ENCODE measurements at regions of chr19 and their contacts with region 1.

Region 1: GRCh38 chr19:40139533-40140287 is 49.0 kb upstream of the ZNF780A start:
- DNase-seq: peak in 1 of 2 experiments; percentile 54
- H3K4me3 ChIP-seq: no peak overlapping the region
- H3K27ac ChIP-seq: no peak overlapping the region
- H3K4me1 ChIP-seq: no peaks in the 10 kb centered on the region
- H3K27me3 ChIP-seq: peaks cover 31% of the 10 kb centered on the region
- CTCF ChIP-seq: peak; percentile 84

Region 2: GRCh38 chr19:39792999-39793546 is 346.6 kb before region 1 on chr19:
- CTCF ChIA-PET with region 1: no interaction called
- POLR2A ChIA-PET with region 1: no interaction called
- intact Hi-C with region 1: loop called (anchors 10 kb)
- DNase-seq: peak in 1 of 2 experiments; percentile 66
- H3K4me3 ChIP-seq: no peak overlapping the region
- H3K27ac ChIP-seq: no peak overlapping the region
- H3K4me1 ChIP-seq: no peaks in the 10 kb centered on the region
- H3K27me3 ChIP-seq: peaks cover 9% of the 10 kb centered on the region
- CTCF ChIP-seq: peak; percentile 85

Region 3: DNA sequence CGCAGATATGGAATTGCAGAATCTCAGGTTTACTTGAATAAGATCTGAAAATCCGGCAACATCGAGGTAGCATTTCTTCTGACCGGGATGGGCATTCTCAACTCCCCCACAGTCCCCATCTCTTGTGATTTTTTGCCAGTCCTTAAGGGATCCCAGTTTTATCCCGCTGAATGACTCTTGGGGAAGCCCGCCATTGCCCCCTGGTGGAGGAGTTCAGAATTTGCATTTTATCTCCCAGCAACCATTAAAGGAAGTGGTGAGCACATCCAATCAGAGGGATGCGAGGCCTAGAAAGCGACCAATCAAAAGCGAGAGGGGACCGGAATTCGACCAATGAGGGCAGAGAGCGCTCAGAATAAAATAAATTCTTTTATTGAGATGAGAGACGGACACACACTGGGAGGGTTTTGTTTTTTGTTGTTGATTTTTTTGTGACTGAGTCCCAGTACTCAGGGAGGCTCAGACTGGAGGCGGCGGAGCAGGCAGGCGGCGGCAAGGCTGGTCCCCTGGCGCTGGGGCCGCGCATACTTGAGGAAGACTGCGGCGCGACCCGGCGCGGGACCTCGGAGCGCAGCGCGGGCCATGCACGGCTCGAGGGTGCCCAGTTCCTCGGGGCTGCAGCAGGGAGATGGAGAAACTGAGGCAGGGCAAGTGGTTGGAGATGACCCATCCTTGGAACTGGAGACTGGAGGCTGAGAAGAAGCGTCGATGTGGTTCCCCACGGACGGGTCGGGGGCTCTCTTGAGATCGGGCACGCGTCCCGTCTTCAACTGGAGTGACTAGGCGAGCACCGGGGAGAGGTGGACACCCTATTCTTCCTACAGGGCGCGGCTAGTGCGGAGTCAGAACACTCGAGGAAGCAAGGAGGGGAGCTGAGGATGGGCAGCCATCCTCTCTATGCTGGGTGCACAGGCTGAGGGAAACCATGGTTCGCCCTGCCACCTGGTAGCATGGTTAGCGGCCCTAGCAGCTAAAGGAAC is 82.4 kb after region 1 on chr19:
- CTCF ChIA-PET with region 1: interaction called, 14 read pairs
- POLR2A ChIA-PET with region 1: no interaction called
- intact Hi-C with region 1: loop called (anchors 1 kb)
- DNase-seq: peak; percentile 73 to 84
- H3K4me3 ChIP-seq: no peak overlapping the region
- H3K27ac ChIP-seq: no peak overlapping the region
- H3K4me1 ChIP-seq: peaks cover 17% of the 10 kb centered on the region
- H3K27me3 ChIP-seq: no peaks in the 10 kb centered on the region
- CTCF ChIP-seq: peak; percentile 97

Region 4: DNA sequence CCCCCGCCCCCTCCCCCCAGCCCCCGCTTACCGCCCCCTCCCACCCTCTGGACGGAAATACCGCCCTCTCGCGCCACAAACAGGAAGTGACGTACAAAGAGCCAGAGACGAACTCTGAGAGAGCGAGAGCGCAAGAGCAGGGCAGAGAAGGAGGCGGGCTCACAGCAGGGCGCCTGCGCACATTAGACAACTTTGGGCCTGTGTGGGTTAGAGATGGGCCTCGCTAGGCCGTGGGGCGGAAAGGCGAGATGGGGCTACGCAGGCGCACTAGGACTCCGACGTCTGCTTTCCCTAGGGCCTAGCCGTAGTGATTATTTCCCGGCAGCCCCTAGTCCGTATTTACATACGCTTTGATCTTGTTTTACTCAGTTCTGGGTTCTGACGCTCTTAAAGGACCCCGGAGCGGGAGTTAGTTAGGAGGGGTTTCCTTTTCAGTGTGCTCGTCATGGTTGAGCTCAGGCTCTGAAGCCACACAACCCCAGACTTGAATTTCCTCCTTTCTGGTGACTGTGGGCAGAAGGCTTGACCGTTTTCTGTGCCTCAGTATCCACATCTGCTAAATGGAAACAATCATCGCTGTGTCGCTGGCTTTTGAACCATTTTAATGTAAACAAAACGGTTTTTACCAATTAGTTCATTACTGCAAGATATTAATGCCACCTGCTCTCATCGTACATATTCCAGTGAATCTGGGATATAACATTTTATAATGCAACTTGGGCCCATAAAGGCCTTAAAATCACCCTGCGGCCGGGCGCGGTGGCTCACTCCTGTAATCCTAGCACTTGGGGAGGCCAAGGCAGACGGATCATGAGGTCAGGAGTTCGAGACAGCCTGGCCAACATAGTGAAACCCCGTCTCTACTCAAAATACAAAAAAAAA is 145.9 kb after region 1 on chr19:
- CTCF ChIA-PET with region 1: no interaction called
- POLR2A ChIA-PET with region 1: no interaction called
- intact Hi-C with region 1: no loop called
- DNase-seq: peak; percentile 97 to 98
- H3K4me3 ChIP-seq: peak overlapping the region; percentile 53
- H3K27ac ChIP-seq: peak overlapping the region; percentile 83
- H3K4me1 ChIP-seq: peaks cover 17% of the 10 kb centered on the region; the same call in 1 of the 2 replicates
- H3K27me3 ChIP-seq: no peaks in the 10 kb centered on the region
- CTCF ChIP-seq: no peak

Region 5: GRCh38 chr19:40529093-40529954 is 389.6 kb after region 1 on chr19:
- CTCF ChIA-PET with region 1: no interaction called
- POLR2A ChIA-PET with region 1: no interaction called
- intact Hi-C with region 1: loop called (anchors 10 kb)
- DNase-seq: peak; percentile 65 to 87
- H3K4me3 ChIP-seq: peak overlapping the region; percentile 54
- H3K27ac ChIP-seq: no peak overlapping the region
- H3K4me1 ChIP-seq: no peaks in the 10 kb centered on the region
- H3K27me3 ChIP-seq: no peaks in the 10 kb centered on the region; the same call in 1 of the 2 replicates
- CTCF ChIP-seq: peak; percentile 96

Region 6: GRCh38 chr19:41859618-41860418 is 1720.1 kb after region 1 on chr19 and contains the start of gene RPS19:
- CTCF ChIA-PET with region 1: no interaction called
- POLR2A ChIA-PET with region 1: no interaction called
- intact Hi-C with region 1: loop called (anchors 10 kb)
- DNase-seq: peak; percentile 93 to 98
- H3K4me3 ChIP-seq: peak within 1 kb of the TSS; percentile 98
- H3K27ac ChIP-seq: peak within 1 kb of the TSS; percentile 96
- H3K4me1 ChIP-seq: peaks cover 41% of the 10 kb centered on the region
- H3K27me3 ChIP-seq: peaks cover 7% of the 10 kb centered on the region
- CTCF ChIP-seq: peak; percentile 63
- total RNA-seq, gene RPS19: 2,593 and 3,356 TPM in 2 replicates

Measured in PC-9 (cell line).